Esophagus squamous epithelium (tissue), 5 donors: ENCODE measurements at regions of chr7 and their contacts with region 1.

Region 1: GRCh38 chr7:142880876-142881505 is 4.6 kb downstream of the TRPV6 start:
- DNase-seq: no peak
- H3K4me3 ChIP-seq: no peak overlapping the region
- H3K27ac ChIP-seq: no peak overlapping the region
- H3K4me1 ChIP-seq: peaks cover 0 to 38% (median 4%) of the 10 kb centered on the region in 3 donors
- H3K27me3 ChIP-seq: peaks cover 0 to 26% (median 0%) of the 10 kb centered on the region in 4 donors
- CTCF ChIP-seq: peak; percentile 66 to 88 (median 84)
- POLR2A ChIP-seq: no peak

Region 2: GRCh38 chr7:142703655-142704305 is 177.2 kb before region 1 on chr7:
- intact Hi-C with region 1: no loop called
- DNase-seq: no peak
- H3K4me3 ChIP-seq: no peak overlapping the region
- H3K27ac ChIP-seq: no peak overlapping the region
- H3K4me1 ChIP-seq: no peaks in the 10 kb centered on the region
- H3K27me3 ChIP-seq: no peaks in the 10 kb centered on the region
- CTCF ChIP-seq: no peak
- POLR2A ChIP-seq: no peak

Region 3: DNA sequence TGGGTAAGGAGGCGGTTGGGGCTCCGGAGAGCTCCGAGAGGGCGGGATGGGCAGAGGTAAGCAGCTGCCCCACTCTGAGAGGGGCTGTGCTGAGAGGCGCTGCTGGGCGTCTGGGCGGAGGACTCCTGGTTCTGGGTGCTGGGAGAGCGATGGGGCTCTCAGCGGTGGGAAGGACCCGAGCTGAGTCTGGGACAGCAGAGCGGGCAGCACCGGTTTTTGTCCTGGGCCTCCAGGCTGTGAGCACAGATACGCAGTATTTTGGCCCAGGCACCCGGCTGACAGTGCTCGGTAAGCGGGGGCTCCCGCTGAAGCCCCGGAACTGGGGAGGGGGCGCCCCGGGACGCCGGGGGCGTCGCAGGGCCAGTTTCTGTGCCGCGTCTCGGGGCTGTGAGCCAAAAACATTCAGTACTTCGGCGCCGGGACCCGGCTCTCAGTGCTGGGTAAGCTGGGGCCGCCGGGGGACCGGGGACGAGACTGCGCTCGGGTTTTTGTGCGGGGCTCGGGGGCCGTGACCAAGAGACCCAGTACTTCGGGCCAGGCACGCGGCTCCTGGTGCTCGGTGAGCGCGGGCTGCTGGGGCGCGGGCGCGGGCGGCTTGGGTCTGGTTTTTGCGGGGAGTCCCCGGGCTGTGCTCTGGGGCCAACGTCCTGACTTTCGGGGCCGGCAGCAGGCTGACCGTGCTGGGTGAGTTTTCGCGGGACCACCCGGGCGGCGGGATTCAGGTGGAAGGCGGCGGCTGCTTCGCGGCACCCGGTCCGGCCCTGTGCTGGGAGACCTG is 84.2 kb before region 1 on chr7:
- intact Hi-C with region 1: no loop called
- DNase-seq: no peak
- H3K4me3 ChIP-seq: peak overlapping the region; percentile 28 to 63 (median 44)
- H3K27ac ChIP-seq: peak overlapping the region; percentile 64 to 78 (median 72)
- H3K4me1 ChIP-seq: peaks cover 15 to 20% (median 18%) of the 10 kb centered on the region in 3 donors
- H3K27me3 ChIP-seq: peaks cover 13 to 77% (median 17%) of the 10 kb centered on the region in 4 donors
- CTCF ChIP-seq: no peak
- POLR2A ChIP-seq: no peak

Region 4: DNA sequence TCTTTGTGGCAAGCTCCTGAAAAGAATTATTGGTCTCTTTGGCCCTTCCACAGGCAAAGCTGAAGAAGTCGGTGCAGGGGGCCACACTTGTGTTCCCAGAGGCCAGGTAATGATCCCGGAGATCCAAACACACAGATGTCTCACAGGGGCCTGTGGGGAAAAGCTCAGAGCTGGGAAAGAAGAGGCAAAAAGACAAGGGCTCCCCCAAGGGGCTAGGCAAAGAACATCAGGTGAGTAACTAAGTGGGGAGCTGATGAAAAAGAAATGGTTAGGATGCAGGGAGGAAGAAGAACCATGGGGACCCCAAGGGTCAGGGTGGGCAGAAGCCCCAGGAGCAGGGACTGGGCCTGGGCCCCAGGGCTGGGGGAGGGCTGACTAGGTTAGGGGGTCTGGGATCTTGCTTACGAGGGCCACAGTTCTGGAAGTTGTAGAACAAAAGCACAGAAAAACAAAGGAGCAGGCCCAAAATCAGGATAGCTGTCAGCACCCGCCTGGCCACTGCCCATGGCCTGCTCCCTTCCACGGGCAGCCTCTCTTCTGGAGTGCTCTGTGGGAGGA is 80.0 kb after region 1 on chr7:
- intact Hi-C with region 1: loop called (anchors 5 kb)
- DNase-seq: no peak
- H3K4me3 ChIP-seq: no peak overlapping the region
- H3K27ac ChIP-seq: no peak overlapping the region
- H3K4me1 ChIP-seq: peaks cover 0 to 9% (median 3%) of the 10 kb centered on the region in 3 donors
- H3K27me3 ChIP-seq: peaks cover 0 to 6% (median 0%) of the 10 kb centered on the region in 4 donors
- CTCF ChIP-seq: peak in 5 of 6 experiments; percentile 25 to 68 (median 40)
- POLR2A ChIP-seq: no peak